Left ventricle myocardium superior (tissue), 1 donor: ENCODE measurements at regions of chr1 and their contacts with region 1.

Region 1: GRCh38 chr1:24822887-24823286 is 77.6 kb downstream of the CLIC4 start:
- DNase-seq: no peak
- ATAC-seq: no peak

Region 2: GRCh38 chr1:24769656-24770651 is 52.9 kb before region 1 on chr1:
- intact Hi-C with region 1: loop called (anchors 10 kb)
- DNase-seq: no peak
- ATAC-seq: peak; percentile 76